Activated CD4-positive, alpha-beta T cell treated with anti-CD3 and anti-CD28 coated beads for 36 hours (primary cell): ENCODE measurements at regions of chr5 and their contacts with region 1.

Region 1: GRCh38 chr5:59810041-59810440 is 83.5 kb downstream of the PDE4D start:
- DNase-seq: peak; percentile 80
- ATAC-seq: peak; percentile 63
- H3K4me3 Mint-ChIP-seq: no peak overlapping the region
- H3K27ac Mint-ChIP-seq: no peak overlapping the region
- H3K4me1 Mint-ChIP-seq: peaks cover 4% of the 10 kb centered on the region
- H3K27me3 Mint-ChIP-seq: peaks cover 10% of the 10 kb centered on the region

Region 2: GRCh38 chr5:59799668-59800346 is 10.2 kb before region 1 on chr5:
- CTCF ChIA-PET with region 1: interaction called, 23 read pairs
- POLR2A ChIA-PET with region 1: no interaction called
- intact Hi-C with region 1: no loop called
- DNase-seq: peak; percentile 23
- ATAC-seq: peak; percentile 74
- H3K4me3 Mint-ChIP-seq: no peak overlapping the region
- H3K27ac Mint-ChIP-seq: no peak overlapping the region
- H3K4me1 Mint-ChIP-seq: no peaks in the 10 kb centered on the region
- H3K27me3 Mint-ChIP-seq: no peaks in the 10 kb centered on the region

Region 3: GRCh38 chr5:60287174-60287771 is 477.2 kb after region 1 on chr5:
- CTCF ChIA-PET with region 1: interaction called, 8 read pairs
- POLR2A ChIA-PET with region 1: no interaction called
- intact Hi-C with region 1: loop called (anchors 2 to 5 kb)
- DNase-seq: peak; percentile 51
- ATAC-seq: no peak
- H3K4me3 Mint-ChIP-seq: no peak overlapping the region
- H3K27ac Mint-ChIP-seq: no peak overlapping the region
- H3K4me1 Mint-ChIP-seq: no peaks in the 10 kb centered on the region
- H3K27me3 Mint-ChIP-seq: no peaks in the 10 kb centered on the region

Region 4: DNA sequence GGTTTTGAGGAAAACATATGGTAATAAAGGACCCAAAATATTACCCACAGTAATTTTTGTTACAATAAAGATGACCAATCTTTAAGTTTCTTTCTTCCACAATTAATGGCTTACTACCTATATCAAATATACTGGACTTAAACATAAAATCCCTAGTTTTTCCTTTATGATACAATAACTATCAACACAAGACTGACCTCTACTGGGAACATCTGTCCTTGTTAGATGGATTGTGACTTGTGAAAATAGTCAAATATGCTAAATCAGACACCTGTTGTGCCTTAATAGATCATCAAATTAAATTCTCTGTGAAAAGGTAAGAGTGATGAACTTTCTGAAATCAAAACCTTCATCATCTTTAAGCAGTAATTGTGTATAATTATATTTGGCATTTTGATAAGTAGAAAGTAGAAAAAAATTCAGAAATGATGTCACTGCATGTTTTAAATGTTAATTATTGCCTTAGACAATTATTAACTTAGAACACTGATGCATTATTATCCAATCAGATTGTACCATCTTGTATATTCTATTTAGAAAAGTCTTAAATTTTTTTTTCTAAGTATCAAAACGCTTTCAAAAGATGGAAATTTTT is 776.4 kb after region 1 on chr5:
- CTCF ChIA-PET with region 1: no interaction called
- POLR2A ChIA-PET with region 1: no interaction called
- intact Hi-C with region 1: loop called in 1 of 2 experiments (anchors 5 kb)
- DNase-seq: no peak
- ATAC-seq: no peak
- H3K4me3 Mint-ChIP-seq: no peak overlapping the region
- H3K27ac Mint-ChIP-seq: no peak overlapping the region
- H3K4me1 Mint-ChIP-seq: no peaks in the 10 kb centered on the region
- H3K27me3 Mint-ChIP-seq: no peaks in the 10 kb centered on the region

Region 5: DNA sequence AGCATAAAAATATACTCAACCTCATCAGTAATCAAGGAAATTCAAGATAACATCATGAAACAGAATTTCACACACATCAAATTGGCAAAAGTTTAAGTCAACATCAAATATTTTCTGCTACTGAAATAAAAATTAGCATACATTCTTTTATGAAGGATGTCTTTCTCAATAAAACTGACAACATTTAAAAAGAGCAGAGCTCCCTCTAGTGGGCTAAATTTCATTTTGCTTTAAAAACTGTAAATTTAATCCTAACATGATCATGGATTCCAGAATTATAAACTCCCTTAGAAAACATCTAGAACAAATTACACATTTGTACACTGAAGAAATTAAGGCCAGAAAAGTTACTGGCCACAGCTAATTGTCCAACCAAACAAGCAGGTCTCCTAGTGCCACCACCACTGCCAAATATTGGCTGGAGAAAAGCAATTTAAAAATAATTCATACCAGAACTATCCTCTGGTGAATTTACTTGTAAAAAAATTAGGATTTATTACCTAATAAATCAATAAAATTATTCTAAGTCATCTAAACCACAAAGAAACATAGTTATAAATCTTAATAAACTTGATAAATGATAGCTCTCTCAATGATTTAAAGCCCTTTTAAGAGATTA is 858.8 kb after region 1 on chr5:
- CTCF ChIA-PET with region 1: interaction called, 10 read pairs
- POLR2A ChIA-PET with region 1: no interaction called
- intact Hi-C with region 1: loop called (anchors 1 kb)
- DNase-seq: no peak
- ATAC-seq: no peak
- H3K4me3 Mint-ChIP-seq: no peak overlapping the region
- H3K27ac Mint-ChIP-seq: no peak overlapping the region
- H3K4me1 Mint-ChIP-seq: no peaks in the 10 kb centered on the region
- H3K27me3 Mint-ChIP-seq: no peaks in the 10 kb centered on the region